Endothelial cell of umbilical vein (primary cell): ENCODE measurements at regions of chr2 and their contacts with region 1.

Region 1: GRCh38 chr2:226799181-226799975 is at the start of gene IRS1:
- DNase-seq: peak; percentile 12
- H3K4me3 ChIP-seq: peak within 1 kb of the TSS; percentile 35 to 46 (median 43)
- H3K27ac ChIP-seq: no peak within 1 kb of the TSS
- H3K4me1 ChIP-seq: peaks cover 15% of the 10 kb centered on the region
- H3K27me3 ChIP-seq: peaks cover 19 to 30% of the 10 kb centered on the region in 2 experiments
- CTCF ChIP-seq: peak in 1 of 2 donors; percentile 11
- POLR2A ChIP-seq: no peak
- total RNA-seq, gene IRS1: 0.05 and 0.11 TPM in 2 replicates

Region 2: DNA sequence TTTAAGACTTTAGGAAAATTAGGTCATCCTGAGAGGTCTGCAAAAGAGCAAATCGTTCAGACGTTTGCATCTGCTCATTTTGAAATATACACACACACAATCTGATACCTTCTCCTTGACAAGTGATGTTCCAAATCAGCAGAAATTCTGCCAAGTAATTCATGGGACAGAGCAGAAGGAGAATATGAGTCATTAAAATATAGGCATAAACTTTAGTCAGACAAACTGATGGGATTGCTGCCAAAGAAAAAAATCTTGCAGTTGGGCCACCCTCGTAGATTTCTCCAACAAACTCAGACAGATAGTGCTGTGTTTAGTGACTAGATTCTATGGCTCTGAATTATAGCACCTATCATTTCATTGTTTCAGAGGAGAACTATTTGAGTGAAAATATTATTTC is 1063.5 kb before region 1 on chr2:
- CTCF ChIA-PET with region 1: no interaction called
- POLR2A ChIA-PET with region 1: no interaction called
- dilution Hi-C with region 1: no loop called
- intact Hi-C with region 1: loop called (anchors 5 kb)
- DNase-seq: peak; percentile 89
- H3K4me3 ChIP-seq: no peak overlapping the region
- H3K27ac ChIP-seq: peak overlapping the region; percentile 34
- H3K4me1 ChIP-seq: peaks cover 44% of the 10 kb centered on the region
- H3K27me3 ChIP-seq: no peaks in the 10 kb centered on the region
- CTCF ChIP-seq: no peak
- POLR2A ChIP-seq: no peak

Region 3: GRCh38 chr2:226215902-226216503 is 583.4 kb before region 1 on chr2:
- CTCF ChIA-PET with region 1: interaction called, 20 read pairs
- POLR2A ChIA-PET with region 1: no interaction called
- dilution Hi-C with region 1: no loop called
- intact Hi-C with region 1: loop called (anchors 1 kb)
- DNase-seq: peak; percentile 10
- H3K4me3 ChIP-seq: no peak overlapping the region
- H3K27ac ChIP-seq: no peak overlapping the region
- H3K4me1 ChIP-seq: peaks cover 3% of the 10 kb centered on the region
- H3K27me3 ChIP-seq: no peaks in the 10 kb centered on the region
- CTCF ChIP-seq: peak; percentile 23 to 34
- POLR2A ChIP-seq: no peak

Region 4: GRCh38 chr2:226478109-226478809 is 321.1 kb before region 1 on chr2:
- CTCF ChIA-PET with region 1: no interaction called
- POLR2A ChIA-PET with region 1: no interaction called
- dilution Hi-C with region 1: no loop called
- intact Hi-C with region 1: loop called (anchors 2 kb)
- DNase-seq: peak; percentile 72
- H3K4me3 ChIP-seq: no peak overlapping the region
- H3K27ac ChIP-seq: peak overlapping the region; percentile 71
- H3K4me1 ChIP-seq: peaks cover 13% of the 10 kb centered on the region
- H3K27me3 ChIP-seq: no peaks in the 10 kb centered on the region
- CTCF ChIP-seq: no peak
- POLR2A ChIP-seq: no peak

Region 5: DNA sequence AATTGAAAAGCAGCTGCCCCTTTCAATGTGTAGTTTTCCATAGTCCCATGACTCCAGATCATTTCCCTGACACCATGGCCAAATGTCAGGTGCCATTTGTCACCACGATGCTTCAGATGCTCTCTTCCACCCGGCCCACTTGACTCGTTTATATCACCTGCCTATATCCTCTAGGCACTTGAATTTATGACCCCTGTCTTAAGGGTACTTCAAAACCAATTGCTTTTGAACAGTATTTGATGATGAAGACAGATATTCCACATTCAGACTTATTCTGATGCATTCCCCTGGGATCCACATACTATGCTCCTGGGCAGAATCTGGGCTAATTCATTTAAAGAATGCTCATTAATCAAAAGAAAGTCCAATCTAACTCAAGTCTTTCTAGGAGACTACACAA is 19.6 kb after region 1 on chr2:
- CTCF ChIA-PET with region 1: interaction called, 16 read pairs
- POLR2A ChIA-PET with region 1: no interaction called
- dilution Hi-C with region 1: no loop called
- intact Hi-C with region 1: no loop called
- DNase-seq: no peak
- H3K4me3 ChIP-seq: no peak overlapping the region
- H3K27ac ChIP-seq: no peak overlapping the region
- H3K4me1 ChIP-seq: no peaks in the 10 kb centered on the region
- H3K27me3 ChIP-seq: no peaks in the 10 kb centered on the region
- CTCF ChIP-seq: no peak
- POLR2A ChIP-seq: no peak

Region 6: GRCh38 chr2:226984750-226985582 is 185.6 kb after region 1 on chr2:
- CTCF ChIA-PET with region 1: interaction called, 10 read pairs
- POLR2A ChIA-PET with region 1: no interaction called
- dilution Hi-C with region 1: no loop called
- intact Hi-C with region 1: loop called (anchors 2 kb)
- DNase-seq: peak; percentile 57
- H3K4me3 ChIP-seq: no peak overlapping the region
- H3K27ac ChIP-seq: no peak overlapping the region
- H3K4me1 ChIP-seq: no peaks in the 10 kb centered on the region
- H3K27me3 ChIP-seq: no peaks in the 10 kb centered on the region
- CTCF ChIP-seq: peak; percentile 32 to 42
- POLR2A ChIP-seq: no peak